Common myeloid progenitor, CD34-positive (primary cell): ENCODE measurements at regions of chr14 and their contacts with region 1.

Region 1: DNA sequence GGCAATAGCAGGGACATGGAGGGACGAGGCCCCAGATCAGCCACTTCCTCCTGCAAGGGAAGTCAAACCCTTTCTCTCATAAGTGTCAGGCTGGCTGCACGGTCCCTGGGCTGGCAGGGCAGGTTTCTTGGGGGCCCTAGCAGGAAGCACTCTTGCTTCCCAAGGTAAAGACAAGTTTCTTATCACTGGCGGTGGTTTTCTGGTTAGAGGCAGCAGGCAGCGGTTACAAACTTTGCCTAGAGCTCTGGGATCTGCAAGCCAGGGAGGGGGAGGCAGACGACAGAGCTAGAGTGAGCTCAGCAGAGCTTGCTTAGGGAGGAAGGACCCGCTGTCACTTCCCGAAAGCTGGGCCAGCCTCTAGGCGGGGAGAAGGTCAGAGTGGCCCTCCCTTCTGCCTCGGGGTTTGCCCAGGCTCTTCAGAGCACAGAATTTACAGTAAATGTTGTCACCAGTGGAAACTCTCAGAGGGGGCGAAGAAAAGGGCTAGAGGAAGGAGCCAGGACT is 20.4 kb downstream of the BATF start:
- DNase-seq: peak; percentile 87 to 97 (median 96)
- H3K4me3 ChIP-seq: peak overlapping the region in 6 of 7 experiments; percentile 9 to 69 (median 50)
- H3K27ac ChIP-seq: peak overlapping the region; percentile 56 to 85
- H3K4me1 ChIP-seq: peaks cover 0 to 45% (median 32%) of the 10 kb centered on the region in 4 experiments
- H3K27me3 ChIP-seq: no peaks in the 10 kb centered on the region

Region 2: GRCh38 chr14:75531660-75532317 is 10.9 kb before region 1 on chr14:
- CTCF ChIA-PET with region 1: interaction called, 10 read pairs
- POLR2A ChIA-PET with region 1: no interaction called
- DNase-seq: no peak
- H3K4me3 ChIP-seq: no peak overlapping the region
- H3K27ac ChIP-seq: no peak overlapping the region
- H3K4me1 ChIP-seq: no peaks in the 10 kb centered on the region
- H3K27me3 ChIP-seq: no peaks in the 10 kb centered on the region